Ovary (tissue), 10 donors: ENCODE measurements at regions of chr10 and their contacts with region 1.

Region 1: DNA sequence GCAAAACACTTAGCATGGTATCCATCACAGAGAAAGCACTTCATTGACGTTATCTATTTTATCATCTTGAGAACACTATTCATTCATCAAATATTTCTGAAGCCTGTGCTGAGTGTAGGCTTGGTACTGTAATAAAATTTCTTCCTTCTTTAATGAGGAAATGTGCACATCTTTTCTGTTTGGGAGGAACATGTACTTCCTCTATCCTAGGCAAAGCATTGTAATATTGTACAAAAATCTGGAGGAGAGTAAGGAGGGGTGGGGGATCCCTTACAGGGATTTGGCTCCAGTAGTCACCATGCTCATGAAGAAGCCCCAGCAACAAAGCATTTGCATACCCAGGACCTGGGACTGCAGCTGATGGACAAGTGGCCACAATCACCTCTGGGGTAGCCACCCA is 39.9 kb upstream of the SORCS3 start:
- DNase-seq: no peak
- H3K4me3 ChIP-seq: no peak overlapping the region
- H3K27ac ChIP-seq: no peak overlapping the region
- H3K4me1 ChIP-seq: no peaks in the 10 kb centered on the region
- H3K27me3 ChIP-seq: no peaks in the 10 kb centered on the region
- CTCF ChIP-seq: no peak
- EP300 ChIP-seq: no peak
- POLR2A ChIP-seq: no peak

Region 2: DNA sequence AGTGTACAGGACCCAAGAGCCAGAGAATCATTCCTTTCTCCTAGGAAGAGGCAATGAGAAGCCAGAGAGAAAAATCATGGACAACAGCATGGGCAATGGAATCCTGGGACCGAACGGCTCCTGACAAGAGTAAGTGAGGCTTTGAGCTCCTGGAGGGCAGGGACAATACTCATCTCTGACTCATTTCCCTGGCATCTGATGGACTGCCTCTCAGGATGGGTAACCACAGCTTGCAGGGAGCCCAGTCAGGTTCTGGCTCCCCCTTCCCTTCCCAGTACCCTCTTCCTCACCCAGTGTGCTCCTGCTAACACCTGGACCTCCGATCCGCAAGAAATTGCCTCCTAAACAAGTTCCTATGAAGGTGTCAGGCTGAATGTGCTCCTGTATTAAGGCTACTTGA is 11.3 kb before region 1 on chr10:
- intact Hi-C with region 1: loop called in 1 of 4 experiments (anchors 1 kb)
- DNase-seq: no peak
- H3K4me3 ChIP-seq: no peak overlapping the region
- H3K27ac ChIP-seq: no peak overlapping the region
- H3K4me1 ChIP-seq: no peaks in the 10 kb centered on the region
- H3K27me3 ChIP-seq: no peaks in the 10 kb centered on the region
- CTCF ChIP-seq: no peak
- EP300 ChIP-seq: no peak
- POLR2A ChIP-seq: no peak